GM12878 (cell line): ENCODE measurements at regions of chr1 and their contacts with region 1.

Region 1: DNA sequence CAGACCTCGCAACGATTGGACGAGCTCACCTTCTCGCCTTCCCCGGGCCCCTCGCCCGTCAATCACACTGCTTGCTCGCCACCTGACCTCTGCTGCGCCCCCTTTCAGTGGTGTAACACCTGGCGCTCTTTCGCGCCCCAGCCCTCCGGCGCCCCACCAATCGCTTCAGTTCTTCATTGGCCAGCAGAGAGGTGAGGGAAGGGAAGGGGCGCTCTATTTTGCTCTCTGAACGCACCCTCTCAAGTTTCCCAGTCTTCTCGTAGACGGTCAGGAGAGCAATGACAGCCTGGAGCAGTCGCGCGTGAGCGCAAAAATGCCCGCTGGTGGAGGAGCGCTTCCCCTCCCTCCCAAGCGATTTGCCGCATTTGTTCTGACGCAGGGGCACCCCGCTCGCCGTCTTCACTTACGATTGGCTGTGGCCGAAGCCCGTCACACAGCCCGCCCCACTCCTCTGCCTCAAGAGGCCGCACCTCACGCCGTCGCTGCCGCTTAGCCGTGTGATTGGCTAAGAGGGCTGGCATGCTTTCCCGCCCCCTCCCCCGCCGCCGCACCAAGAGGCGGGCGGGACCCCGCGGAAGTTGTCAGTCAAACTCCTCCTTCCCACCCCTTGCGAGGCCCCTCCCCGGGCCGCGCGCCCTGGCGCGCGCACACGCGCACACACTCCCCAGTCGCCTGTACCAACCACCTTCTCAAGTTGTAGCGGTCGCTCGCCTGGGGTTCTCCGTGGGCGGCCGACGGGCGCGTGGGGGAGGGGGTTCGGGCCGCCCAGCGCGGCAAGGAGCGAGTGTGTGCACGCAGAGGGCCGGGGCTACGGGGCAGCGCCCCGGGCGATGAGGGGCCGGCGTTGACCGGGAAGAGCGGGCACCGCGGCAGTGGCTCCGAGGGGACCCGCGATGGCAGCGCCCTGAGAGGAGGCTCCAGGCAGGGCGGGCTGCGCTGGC is at the start of gene PPP2R5A:
- DNase-seq: peak; percentile 97
- ATAC-seq: peak; percentile 94
- H3K4me3 ChIP-seq: peak within 1 kb of the TSS; percentile 88
- H3K27ac ChIP-seq: peak within 1 kb of the TSS; percentile 79
- H3K4me1 ChIP-seq: peaks cover 7% of the 10 kb centered on the region
- H3K27me3 ChIP-seq: no peaks in the 10 kb centered on the region
- CTCF ChIP-seq: peak; percentile 9 to 40 (median 27); a peak in 5 of 6 replicates
- EP300 ChIP-seq: no peak
- POLR2A ChIP-seq: peak; percentile 77
- RAD21 ChIP-seq: no peak
- polyA plus RNA-seq, gene PPP2R5A: 15.4 to 18.2 TPM

Region 2: DNA sequence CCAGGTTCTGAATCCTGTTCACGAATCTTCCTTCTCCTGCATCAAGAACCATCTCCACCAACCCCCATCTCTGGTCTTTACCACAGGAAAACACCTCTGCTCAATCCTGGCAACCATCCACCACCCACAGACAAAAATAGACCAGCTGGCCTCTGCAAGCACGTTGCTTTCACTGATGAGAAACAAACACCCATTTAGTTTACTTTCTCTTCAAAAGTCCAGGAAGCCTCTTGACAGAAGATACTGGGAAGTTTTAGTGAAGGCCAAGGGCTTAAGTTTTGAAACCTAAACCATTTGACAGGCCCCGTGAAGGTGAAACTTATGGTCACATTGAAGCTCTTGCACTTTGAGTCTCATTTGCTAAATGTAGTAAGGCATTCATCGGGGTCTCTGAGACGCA is 122.4 kb before region 1 on chr1:
- CTCF ChIA-PET with region 1: interaction called, 3 read pairs
- POLR2A ChIA-PET with region 1: interaction called, 5 read pairs
- RAD21 ChIA-PET with region 1: interaction called, 11 read pairs
- SMC1A ChIA-PET with region 1: interaction called, 13 read pairs
- in situ Hi-C with region 1: no loop called
- intact Hi-C with region 1: loop called (anchors 2 kb)
- DNase-seq: peak; percentile 79
- ATAC-seq: peak; percentile 59
- H3K4me3 ChIP-seq: no peak overlapping the region
- H3K27ac ChIP-seq: peak overlapping the region; percentile 45
- H3K4me1 ChIP-seq: peaks cover 47% of the 10 kb centered on the region
- H3K27me3 ChIP-seq: no peaks in the 10 kb centered on the region
- CTCF ChIP-seq: no peak
- EP300 ChIP-seq: peak in 1 of 2 experiments; percentile 70; a peak in 2 of 4 replicates
- POLR2A ChIP-seq: no peak
- RAD21 ChIP-seq: no peak

Region 3: GRCh38 chr1:212414328-212415106 is 129.5 kb after region 1 on chr1 and contains the start of gene PACC1:
- CTCF ChIA-PET with region 1: no interaction called
- POLR2A ChIA-PET with region 1: interaction called, 5 read pairs
- RAD21 ChIA-PET with region 1: no interaction called
- SMC1A ChIA-PET with region 1: no interaction called
- in situ Hi-C with region 1: no loop called
- intact Hi-C with region 1: loop called (anchors 5 kb)
- DNase-seq: peak; percentile 94
- ATAC-seq: peak; percentile 96
- H3K4me3 ChIP-seq: peak within 1 kb of the TSS; percentile 81
- H3K27ac ChIP-seq: peak within 1 kb of the TSS; percentile 90
- H3K4me1 ChIP-seq: peaks cover 20% of the 10 kb centered on the region
- H3K27me3 ChIP-seq: no peaks in the 10 kb centered on the region
- CTCF ChIP-seq: no peak
- EP300 ChIP-seq: peak in 1 of 2 experiments; percentile 88; a peak in 3 of 4 replicates
- POLR2A ChIP-seq: peak; percentile 96
- RAD21 ChIP-seq: no peak
- polyA plus RNA-seq, gene PACC1: 16.1 to 17.2 TPM